Psoas muscle (tissue), 8 donors: ENCODE measurements at regions of chr19 and their contacts with region 1.

Region 1: GRCh38 chr19:2578901-2579677 is 103.2 kb downstream of the GADD45B start:
- DNase-seq: peak; percentile 87 to 94
- ATAC-seq: peak; percentile 84 to 92 (median 88)
- H3K4me3 ChIP-seq: peak overlapping the region; percentile 67
- H3K27ac ChIP-seq: peak overlapping the region; percentile 74
- H3K4me1 ChIP-seq: peaks cover 17% of the 10 kb centered on the region
- H3K27me3 ChIP-seq: no peaks in the 10 kb centered on the region
- CTCF ChIP-seq: peak; percentile 91

Region 2: DNA sequence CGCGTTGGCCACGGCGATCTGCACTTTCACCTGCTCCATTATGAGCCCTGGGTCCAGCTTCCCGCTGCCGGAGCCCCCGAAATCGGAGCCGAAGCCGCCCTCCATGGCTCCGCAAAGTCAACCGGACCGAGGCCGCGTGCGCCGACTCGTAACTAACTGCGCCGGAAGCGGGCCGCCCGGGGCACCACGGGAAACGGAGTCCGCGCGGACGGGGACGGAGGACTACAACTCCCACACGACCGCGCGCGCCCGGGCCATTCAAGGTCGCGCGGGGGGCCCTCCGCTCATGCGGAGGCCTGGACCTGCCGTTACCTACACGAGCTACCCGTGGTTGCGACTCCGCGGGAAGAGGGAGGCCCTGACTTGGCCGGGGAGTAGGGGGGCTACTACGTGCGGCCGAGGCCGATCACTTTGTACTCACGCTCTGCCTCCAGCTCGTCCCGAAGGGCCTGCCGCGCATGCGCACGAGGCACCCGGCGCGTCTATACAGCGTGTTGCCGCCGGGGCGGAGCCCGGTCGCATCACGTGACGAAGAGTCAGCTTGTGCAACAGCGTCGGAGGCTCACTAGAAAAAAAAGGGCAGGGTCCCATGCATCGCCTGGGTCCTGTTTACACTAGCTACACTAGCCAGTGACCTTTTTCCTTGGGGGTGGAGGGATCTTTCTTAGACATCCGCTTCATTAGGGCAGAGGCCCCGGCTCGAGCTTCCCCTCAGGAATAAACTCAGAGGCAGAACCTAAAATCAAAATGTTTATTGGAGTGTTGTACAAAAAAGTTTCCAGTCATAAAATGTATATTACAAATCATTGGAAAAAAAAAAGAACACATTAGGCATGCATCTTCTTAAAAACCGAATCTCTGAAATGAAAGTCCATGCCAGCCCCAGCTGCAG is 151.4 kb before region 1 on chr19 and contains the start of gene TIMM13:
- intact Hi-C with region 1: no loop called
- DNase-seq: peak; percentile 97 to 99
- ATAC-seq: peak; percentile 90 to 94 (median 92)
- H3K4me3 ChIP-seq: peak within 1 kb of the TSS; percentile 98
- H3K27ac ChIP-seq: peak within 1 kb of the TSS; percentile 96
- H3K4me1 ChIP-seq: peaks cover 32% of the 10 kb centered on the region
- H3K27me3 ChIP-seq: no peaks in the 10 kb centered on the region
- CTCF ChIP-seq: no peak
- total RNA-seq, gene TIMM13: 70.3 to 110 (median 92.2) TPM

Region 3: DNA sequence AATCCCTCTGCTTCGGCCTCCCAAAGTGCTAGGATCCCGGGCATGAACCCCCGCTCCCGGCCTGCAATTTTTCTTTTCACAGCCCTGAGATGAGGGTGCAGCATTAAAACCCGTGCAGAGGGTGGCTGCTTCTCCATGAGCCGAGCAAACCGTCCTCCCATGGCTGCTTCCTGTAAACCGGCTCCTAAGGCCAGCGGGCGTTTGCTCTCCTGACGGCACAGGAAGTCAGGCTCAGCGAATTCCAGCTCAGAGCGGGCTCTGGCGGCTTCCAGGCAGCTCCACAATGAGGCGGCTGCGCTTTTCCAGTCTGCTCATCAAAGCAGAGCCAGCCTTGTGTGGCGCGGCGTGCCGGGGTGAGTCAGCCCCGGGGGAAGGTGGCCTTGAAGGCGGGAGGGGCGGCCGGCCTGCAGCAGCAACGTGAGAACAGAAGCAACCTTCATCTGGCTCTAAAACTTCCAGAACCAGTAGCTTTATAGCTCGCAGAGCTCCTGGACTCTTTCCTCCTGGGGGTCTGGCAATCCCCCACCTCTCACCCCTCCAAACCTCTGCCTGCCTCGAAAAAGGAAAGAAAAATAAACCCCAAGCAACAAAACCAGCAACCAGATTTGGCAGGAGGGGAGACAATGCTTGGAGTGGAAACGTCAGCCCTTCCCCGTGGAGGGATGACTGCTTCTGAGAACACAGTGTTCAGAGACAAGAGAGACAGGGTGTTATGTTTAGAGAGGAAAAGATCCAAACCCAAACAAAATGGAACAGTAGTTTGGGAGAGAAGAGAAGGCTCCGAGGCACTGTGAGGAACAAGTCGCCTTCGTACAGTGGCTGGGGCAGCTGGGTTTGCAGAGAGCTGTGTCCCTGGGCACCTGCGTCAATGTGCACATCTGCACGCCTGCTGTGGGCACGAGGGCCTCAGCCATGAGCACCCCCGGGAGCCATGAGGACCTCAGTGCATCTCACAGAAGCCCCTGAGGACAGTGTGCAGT is 35.3 kb before region 1 on chr19:
- intact Hi-C with region 1: loop called (anchors 5 kb)
- DNase-seq: peak; percentile 97
- ATAC-seq: peak; percentile 76 to 84 (median 81)
- H3K4me3 ChIP-seq: peak overlapping the region; percentile 26
- H3K27ac ChIP-seq: peak overlapping the region; percentile 90
- H3K4me1 ChIP-seq: peaks cover 63% of the 10 kb centered on the region
- H3K27me3 ChIP-seq: no peaks in the 10 kb centered on the region
- CTCF ChIP-seq: peak; percentile 26

Region 4: DNA sequence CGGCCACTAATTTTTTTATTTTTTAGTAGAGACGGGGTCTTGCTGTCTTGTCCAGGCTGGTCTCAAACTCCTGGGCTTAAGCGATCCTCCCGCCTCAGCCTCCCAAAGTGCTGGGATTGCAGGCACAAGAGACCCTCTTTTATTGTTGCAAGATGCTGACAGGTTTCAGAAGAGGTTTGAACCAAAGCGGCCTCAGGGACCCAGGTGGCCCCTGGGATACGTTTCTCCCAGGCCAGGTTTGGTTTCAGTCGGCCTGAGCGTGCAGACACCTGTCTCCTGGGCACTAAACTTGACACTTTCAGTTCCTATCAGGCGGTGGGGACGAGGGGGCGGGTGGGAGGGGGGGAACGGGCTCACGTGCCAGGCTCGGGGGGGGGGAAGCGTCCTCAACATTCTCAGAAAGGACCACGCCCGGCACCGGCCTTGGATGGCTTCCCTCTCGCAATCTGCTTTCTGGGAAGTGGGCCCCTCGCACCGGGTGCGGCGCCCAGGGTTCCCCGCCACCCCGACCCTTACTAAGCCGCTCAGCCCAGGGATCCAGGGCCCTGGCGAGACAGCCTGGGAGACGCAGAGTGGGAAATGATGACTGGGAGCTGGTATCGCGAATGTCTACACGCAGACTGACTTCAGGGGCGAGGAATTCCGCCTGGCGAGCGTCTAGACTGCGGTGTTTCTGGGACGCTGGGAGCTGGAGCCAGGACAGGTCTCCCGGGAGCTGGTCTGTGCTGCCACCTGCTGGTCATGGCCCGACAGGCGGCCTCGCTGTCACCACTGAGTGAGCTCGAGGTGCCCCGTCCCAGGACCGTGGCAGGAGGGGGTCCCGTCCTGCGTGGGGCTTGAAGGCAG is 31.8 kb after region 1 on chr19:
- intact Hi-C with region 1: loop called (anchors 2 to 5 kb)
- DNase-seq: peak; percentile 93 to 96
- ATAC-seq: peak; percentile 91 to 99 (median 97)
- H3K4me3 ChIP-seq: peak overlapping the region; percentile 67
- H3K27ac ChIP-seq: peak overlapping the region; percentile 76
- H3K4me1 ChIP-seq: no peaks in the 10 kb centered on the region
- H3K27me3 ChIP-seq: no peaks in the 10 kb centered on the region
- CTCF ChIP-seq: peak; percentile 98

Region 5: DNA sequence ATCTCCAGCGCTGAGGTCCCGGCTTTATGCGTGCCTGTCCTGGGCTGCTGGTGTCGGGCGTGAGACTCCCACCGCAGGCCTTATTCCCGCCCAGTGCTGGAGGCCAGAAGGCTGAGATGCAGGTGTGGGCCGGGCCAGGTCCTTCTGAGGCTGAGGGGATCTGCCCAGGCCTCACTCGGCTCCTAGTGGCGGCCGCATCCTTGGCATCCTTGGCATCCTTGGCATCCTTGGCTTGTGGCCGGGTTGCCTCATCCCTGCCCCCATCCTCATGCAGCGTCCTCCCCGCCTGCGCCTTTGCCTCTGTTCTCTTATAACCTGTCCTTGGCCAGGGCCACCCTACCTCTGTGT is 537.1 kb after region 1 on chr19:
- intact Hi-C with region 1: no loop called
- DNase-seq: no peak
- ATAC-seq: peak; percentile 12 to 44 (median 28)
- H3K4me3 ChIP-seq: no peak overlapping the region
- H3K27ac ChIP-seq: no peak overlapping the region
- H3K4me1 ChIP-seq: no peaks in the 10 kb centered on the region
- H3K27me3 ChIP-seq: no peaks in the 10 kb centered on the region
- CTCF ChIP-seq: no peak